Spleen (tissue), 13 donors: ENCODE measurements at regions of chr1 and their contacts with region 1.

Region 1: GRCh38 chr1:2594001-2594640 is 7.5 kb downstream of the PRXL2B start:
- DNase-seq: peak; percentile 88
- H3K4me3 ChIP-seq: peak overlapping the region in 6 of 8 donors; percentile 7 to 53 (median 20)
- H3K27ac ChIP-seq: peak overlapping the region in 4 of 8 donors; percentile 18 to 32 (median 27)
- H3K4me1 ChIP-seq: peaks cover 0 to 23% (median 13%) of the 10 kb centered on the region in 6 donors
- H3K27me3 ChIP-seq: peaks cover 0 to 23% (median 0%) of the 10 kb centered on the region in 7 donors
- CTCF ChIP-seq: no peak
- POLR2A ChIP-seq: no peak

Region 2: DNA sequence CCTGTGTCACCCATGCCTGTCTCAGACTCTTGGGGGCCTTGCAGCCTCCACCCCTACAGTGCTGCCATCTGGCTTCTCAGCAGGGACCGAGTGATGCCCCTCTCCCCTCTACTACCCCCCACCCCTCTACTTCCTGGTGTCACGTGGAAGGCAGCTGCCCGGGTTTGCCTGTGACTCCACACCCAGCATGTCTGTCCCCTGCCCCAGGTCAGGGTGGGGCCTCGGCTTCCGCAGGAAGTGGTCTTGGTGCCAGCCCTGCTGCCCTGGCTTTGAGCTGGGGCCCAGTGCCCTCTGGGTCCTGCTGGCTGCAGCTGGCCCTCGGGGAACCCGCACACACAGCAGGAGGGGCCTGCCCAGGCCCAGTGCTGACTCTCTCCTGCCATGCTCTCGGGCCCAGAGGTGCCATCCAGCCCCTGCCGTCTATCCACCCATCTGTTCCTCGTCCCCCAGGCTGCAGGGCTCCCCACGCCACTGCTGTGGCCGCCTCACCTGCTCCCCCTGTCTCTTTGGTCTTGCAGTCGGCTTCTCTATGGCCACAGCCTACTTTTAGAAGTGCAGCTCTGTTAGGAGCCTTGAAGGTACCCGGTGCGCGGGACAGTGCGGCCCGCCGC is 94.0 kb before region 1 on chr1:
- intact Hi-C with region 1: no loop called
- DNase-seq: no peak
- H3K4me3 ChIP-seq: no peak overlapping the region
- H3K27ac ChIP-seq: peak overlapping the region in 2 of 8 donors; percentile 23 to 45
- H3K4me1 ChIP-seq: peaks cover 10 to 87% (median 57%) of the 10 kb centered on the region in 6 donors
- H3K27me3 ChIP-seq: peaks cover 0 to 39% (median 13%) of the 10 kb centered on the region in 7 donors
- CTCF ChIP-seq: no peak
- POLR2A ChIP-seq: no peak

Region 3: DNA sequence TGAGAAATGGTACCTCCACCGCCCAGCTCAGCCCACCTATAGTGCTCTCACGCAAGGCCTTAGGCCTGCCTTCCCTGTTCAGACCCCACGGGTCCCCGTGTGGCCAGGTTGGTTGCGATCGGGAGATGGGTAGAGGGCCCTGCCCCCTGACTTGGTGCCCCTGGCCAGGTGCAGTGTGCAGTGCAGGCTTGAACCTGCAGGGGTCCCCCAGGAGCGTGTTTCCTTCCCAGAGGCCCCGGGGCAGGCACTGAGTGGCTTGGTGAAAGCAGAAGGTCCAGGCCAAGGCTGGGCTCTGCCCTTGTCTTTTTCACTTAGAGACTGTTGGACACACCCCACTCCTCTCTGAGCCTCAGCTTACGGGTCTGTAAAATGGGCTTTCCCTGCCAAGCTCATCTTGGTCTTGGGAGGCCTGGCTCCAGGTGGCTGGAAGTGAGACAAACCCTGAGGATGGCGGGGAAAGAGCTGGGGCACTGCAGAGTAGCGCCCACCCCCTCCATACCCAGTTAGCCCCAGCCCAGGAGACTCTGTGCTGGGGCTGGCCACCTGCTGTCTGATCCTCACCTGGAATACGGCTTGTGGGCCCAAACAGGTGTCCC is 54.7 kb before region 1 on chr1:
- intact Hi-C with region 1: no loop called
- DNase-seq: no peak
- H3K4me3 ChIP-seq: no peak overlapping the region
- H3K27ac ChIP-seq: no peak overlapping the region
- H3K4me1 ChIP-seq: peaks cover 0 to 75% (median 50%) of the 10 kb centered on the region in 6 donors
- H3K27me3 ChIP-seq: peaks cover 0 to 69% (median 13%) of the 10 kb centered on the region in 7 donors
- CTCF ChIP-seq: peak in 8 of 11 experiments; percentile 22 to 52 (median 36)
- POLR2A ChIP-seq: no peak

Region 4: DNA sequence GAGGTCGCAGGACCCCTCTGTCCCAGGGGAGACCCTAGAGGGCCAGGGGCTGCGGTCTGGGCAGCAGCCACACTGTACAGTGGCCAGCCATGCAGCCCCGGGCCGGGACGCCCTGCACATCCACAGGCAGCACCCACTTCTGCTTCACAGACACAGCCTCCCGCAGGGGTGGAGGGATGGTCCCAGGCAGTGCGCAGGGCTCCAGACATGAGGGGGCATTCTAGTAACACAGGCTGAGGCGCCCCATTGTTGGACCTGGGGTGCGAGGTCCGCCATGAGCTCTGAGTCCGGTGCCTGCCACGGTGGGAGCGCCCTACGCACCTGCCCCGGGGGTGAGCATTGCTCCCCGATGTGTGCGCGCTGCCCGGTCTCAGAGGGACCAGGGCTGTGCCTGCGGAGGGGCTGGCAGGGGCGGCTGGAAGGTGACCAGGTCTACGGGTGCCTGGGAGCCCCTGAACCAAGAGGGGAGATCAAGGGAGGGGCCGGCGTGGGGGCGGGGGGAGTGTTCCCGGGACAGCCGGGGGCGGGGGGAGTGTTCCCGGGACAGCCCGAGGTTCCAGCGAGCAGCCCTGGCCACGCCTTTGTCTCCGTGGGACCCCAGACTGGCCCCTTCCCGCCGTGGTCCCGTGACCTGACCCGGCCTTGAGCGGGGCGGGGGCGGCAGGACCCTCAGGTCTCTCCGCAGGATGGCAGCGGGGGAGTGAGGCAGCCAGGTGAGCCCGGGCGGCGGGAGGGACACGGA is 34.2 kb after region 1 on chr1:
- intact Hi-C with region 1: no loop called
- DNase-seq: peak; percentile 61
- H3K4me3 ChIP-seq: peak overlapping the region in 1 of 8 donors; percentile 19
- H3K27ac ChIP-seq: no peak overlapping the region
- H3K4me1 ChIP-seq: peaks cover 0 to 15% (median 11%) of the 10 kb centered on the region in 6 donors
- H3K27me3 ChIP-seq: peaks cover 4 to 82% (median 53%) of the 10 kb centered on the region in 7 donors
- CTCF ChIP-seq: no peak
- POLR2A ChIP-seq: no peak

Region 5: GRCh38 chr1:2642560-2643413 is 48.7 kb after region 1 on chr1:
- intact Hi-C with region 1: loop called (anchors 5 kb)
- DNase-seq: peak; percentile 97
- H3K4me3 ChIP-seq: peak overlapping the region; percentile 57 to 97 (median 78)
- H3K27ac ChIP-seq: peak overlapping the region; percentile 83 to 98 (median 94)
- H3K4me1 ChIP-seq: peaks cover 8 to 39% (median 21%) of the 10 kb centered on the region in 6 donors
- H3K27me3 ChIP-seq: no peaks in the 10 kb centered on the region
- CTCF ChIP-seq: peak in 6 of 11 experiments; percentile 16 to 44 (median 32)
- POLR2A ChIP-seq: peak; percentile 20 to 68 (median 33)

Region 6: GRCh38 chr1:4425892-4426291 is 1831.8 kb after region 1 on chr1:
- intact Hi-C with region 1: no loop called
- DNase-seq: no peak
- H3K4me3 ChIP-seq: no peak overlapping the region
- H3K27ac ChIP-seq: no peak overlapping the region
- H3K4me1 ChIP-seq: no peaks in the 10 kb centered on the region
- H3K27me3 ChIP-seq: peaks cover 0 to 13% (median 0%) of the 10 kb centered on the region in 7 donors
- CTCF ChIP-seq: no peak
- POLR2A ChIP-seq: no peak